Spleen (tissue), 13 donors: ENCODE measurements at regions of chr16 and their contacts with region 1.

Region 1: DNA sequence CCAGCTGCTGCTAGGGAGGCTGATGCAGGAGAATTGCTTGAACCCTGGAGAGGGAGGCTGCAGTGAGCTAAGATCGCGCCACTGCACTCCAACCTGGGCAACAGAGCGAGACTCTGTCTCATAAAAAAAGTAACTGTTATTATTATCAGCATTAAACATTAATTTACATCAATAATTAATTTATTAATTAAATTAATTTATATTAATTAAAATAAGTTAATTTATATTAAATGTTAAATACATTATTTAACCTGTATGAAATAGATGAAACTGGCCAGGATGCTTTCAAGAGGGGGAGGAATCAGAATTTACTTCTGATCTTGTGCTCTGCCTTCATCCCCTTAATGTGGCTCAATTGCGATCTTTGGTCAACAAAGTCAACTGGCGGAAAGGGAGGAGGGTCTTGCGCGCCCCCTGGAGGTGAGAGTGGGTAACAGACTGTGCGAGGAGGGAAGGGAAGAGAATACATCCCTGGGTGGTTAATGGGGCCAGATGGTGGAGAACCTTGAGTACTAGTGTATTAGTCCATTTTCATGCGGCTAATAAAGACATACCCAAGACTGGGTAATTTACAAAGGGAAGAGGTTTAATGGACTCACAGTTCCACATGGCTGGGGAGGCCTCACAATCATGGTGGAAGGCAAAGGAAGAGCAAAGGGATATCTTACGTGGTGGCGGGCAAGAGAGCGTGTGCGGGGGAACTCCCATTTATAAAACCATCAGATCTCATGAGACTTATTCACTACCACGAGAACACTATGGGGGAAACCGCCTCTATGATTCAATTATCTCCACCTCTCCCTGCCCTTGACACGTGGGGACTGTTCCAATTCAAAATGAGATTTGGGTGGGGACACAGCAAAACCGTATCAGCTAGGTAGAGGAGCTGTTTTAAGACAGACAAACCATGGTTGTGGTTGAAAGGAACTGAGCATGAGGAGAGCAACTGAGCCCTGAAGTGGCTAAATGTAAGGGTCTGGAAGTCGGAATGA is 15.7 kb upstream of the CPPED1 start:
- DNase-seq: peak; percentile 92
- H3K4me3 ChIP-seq: no peak overlapping the region
- H3K27ac ChIP-seq: no peak overlapping the region
- H3K4me1 ChIP-seq: peaks cover 0 to 43% (median 8%) of the 10 kb centered on the region in 6 donors
- H3K27me3 ChIP-seq: no peaks in the 10 kb centered on the region
- CTCF ChIP-seq: peak; percentile 85 to 97 (median 92)
- POLR2A ChIP-seq: no peak

Region 2: DNA sequence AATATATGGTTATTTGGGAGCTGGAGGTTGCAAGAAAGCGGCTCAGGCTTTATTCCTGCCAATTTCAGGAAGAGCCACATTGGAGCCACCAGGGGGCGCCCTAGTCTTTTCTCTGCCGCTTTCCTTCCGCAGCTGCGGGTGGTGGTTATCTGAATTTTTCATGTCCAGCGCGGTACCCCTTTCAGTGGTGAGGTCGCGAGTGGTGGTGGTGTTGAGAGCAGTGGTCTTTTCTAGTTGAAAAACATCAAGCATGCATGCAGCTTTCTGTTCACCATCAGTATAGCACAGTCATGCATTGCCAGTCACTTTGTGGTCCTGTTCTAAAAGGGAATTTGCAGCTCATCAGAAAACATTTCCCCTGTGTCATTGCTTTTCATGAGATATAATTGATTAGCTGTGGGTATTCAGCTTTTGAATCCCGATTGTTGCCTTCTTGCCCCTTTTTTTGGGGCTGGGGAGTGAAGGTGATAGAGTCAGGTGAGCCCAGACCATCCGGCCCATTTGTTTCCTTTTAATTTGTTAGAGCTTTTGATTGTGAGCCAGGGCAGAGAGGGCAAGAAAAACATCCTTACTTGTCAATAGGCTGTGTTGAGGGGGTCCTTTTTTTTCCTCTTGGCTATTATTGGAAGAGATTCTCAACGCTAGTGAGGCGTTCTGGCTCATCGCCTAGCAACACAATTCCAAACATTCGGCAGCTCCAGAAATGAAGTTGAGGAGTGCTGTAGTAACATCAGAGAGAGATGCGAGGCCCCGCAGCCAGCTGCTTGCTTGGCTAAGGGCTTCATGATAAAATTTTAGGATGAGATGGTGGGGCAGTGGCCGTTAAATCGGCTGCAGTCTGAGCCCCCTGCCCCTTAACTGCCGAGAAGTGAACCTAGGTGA is 723.9 kb before region 1 on chr16:
- intact Hi-C with region 1: loop called (anchors 10 kb)
- DNase-seq: peak; percentile 88
- H3K4me3 ChIP-seq: peak overlapping the region in 1 of 8 donors; percentile 39
- H3K27ac ChIP-seq: no peak overlapping the region
- H3K4me1 ChIP-seq: peaks cover 11 to 74% (median 44%) of the 10 kb centered on the region in 6 donors
- H3K27me3 ChIP-seq: no peaks in the 10 kb centered on the region
- CTCF ChIP-seq: peak; percentile 52 to 90 (median 78)
- POLR2A ChIP-seq: no peak

Region 3: GRCh38 chr16:12455287-12455798 is 364.1 kb before region 1 on chr16:
- intact Hi-C with region 1: loop called (anchors 5 kb)
- DNase-seq: peak; percentile 91
- H3K4me3 ChIP-seq: no peak overlapping the region
- H3K27ac ChIP-seq: no peak overlapping the region
- H3K4me1 ChIP-seq: peaks cover 15 to 40% (median 24%) of the 10 kb centered on the region in 6 donors
- H3K27me3 ChIP-seq: no peaks in the 10 kb centered on the region
- CTCF ChIP-seq: peak; percentile 44 to 91 (median 81)
- POLR2A ChIP-seq: no peak

Region 4: GRCh38 chr16:12573730-12574383 is 245.6 kb before region 1 on chr16:
- intact Hi-C with region 1: loop called (anchors 5 kb)
- DNase-seq: peak; percentile 78
- H3K4me3 ChIP-seq: no peak overlapping the region
- H3K27ac ChIP-seq: peak overlapping the region in 1 of 8 donors; percentile 37
- H3K4me1 ChIP-seq: peaks cover 0 to 12% (median 6%) of the 10 kb centered on the region in 6 donors
- H3K27me3 ChIP-seq: no peaks in the 10 kb centered on the region
- CTCF ChIP-seq: peak in 7 of 11 experiments; percentile 32 to 75 (median 64)
- POLR2A ChIP-seq: no peak